ENCODE measurements at regions of chr4 and their contacts with region 1.

Region 1: DNA sequence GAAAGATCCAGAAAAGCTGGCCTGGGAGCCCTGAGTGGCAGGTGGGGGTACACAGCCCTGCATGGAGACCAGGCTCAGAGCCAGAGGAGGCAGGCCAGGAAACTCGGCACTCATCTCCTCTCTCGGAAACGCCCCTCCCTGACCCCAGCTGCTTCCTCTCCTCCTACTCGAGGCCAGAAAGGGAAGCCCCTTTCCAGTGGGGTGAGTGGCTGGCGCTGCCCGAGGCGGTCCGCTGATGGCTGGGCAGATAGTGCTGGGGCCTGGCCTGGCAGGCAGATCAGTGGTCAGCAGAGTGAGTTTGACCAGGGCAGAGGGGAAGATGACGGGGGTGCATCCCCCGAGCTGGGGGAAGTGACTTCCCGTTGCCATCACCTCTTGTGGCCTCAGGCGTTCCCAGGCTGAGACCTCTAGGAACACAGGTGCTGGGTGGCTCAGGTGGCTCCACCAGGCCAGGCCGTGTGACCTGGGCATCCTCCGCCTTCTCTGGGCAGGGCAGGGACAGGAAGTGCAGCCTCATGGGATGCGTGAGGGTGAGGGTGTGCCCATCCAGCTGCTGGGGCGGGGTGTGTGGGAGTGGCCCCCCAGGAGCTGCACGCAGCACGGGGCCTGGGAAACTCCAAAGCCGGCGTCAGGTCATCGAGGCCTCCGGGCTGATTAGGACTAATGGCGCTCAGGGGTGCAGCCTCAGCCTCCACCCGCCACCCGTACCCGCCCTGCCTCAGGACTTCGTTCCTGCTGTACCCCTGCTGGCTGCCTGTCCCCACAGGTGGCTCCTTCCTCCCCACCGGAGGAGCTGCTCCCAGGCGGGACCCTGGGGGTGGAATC is 5.7 kb downstream of the SH3BP2 start:
- DNase-seq: peak; percentile 78
- H3K4me3 Mint-ChIP-seq: peak overlapping the region; percentile 73
- H3K27ac Mint-ChIP-seq: peak overlapping the region; percentile 83
- H3K4me1 Mint-ChIP-seq: peaks cover 61% of the 10 kb centered on the region
- H3K27me3 Mint-ChIP-seq: no peaks in the 10 kb centered on the region

Region 2: DNA sequence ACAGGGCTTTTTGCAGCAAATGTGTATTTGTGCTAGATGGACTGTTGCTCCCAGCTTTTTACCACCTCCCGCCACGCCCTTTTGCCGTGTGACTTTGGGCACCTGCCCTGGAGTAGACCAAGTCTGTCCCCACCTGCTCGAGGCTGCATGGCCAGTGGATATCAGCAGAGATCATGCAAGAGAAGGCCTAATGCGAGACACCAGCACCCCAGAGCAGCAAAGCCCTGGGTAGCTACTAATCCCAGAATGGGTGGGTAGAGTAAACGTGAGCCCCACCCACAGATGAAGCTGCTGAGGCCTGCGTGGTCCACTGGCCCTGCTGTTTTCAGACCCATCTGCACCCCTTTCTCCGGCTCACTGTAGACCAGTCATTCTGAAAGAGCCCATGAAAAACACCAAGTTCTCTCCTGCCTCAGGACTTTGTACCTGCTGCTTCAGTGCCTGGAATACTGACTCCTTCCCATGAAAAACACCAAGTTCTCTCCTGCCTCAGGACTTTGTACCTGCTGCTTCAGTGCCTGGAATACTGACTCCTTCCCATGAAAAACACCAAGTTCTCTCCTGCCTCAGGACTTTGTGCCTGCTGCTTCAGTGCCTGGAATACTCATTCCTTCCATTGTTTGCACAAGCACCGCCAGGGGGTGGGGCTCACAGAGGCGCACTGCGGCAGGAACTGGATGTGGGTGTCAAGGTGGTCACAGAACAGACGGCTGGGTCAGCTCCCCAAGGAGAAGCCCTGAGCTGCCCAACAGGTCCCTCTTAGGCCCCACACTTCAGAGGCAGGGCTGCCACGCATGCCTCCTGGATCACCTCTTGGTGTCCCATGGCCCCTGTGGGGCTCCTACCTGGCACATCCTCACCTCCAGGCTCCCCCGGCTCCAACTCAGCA is 37.3 kb before region 1 on chr4:
- CTCF ChIA-PET with region 1: interaction called, 20 read pairs
- POLR2A ChIA-PET with region 1: no interaction called
- intact Hi-C with region 1: loop called (anchors 5 kb)
- DNase-seq: peak; percentile 51
- H3K4me3 Mint-ChIP-seq: no peak overlapping the region
- H3K27ac Mint-ChIP-seq: no peak overlapping the region
- H3K4me1 Mint-ChIP-seq: peaks cover 9% of the 10 kb centered on the region
- H3K27me3 Mint-ChIP-seq: no peaks in the 10 kb centered on the region

Region 3: DNA sequence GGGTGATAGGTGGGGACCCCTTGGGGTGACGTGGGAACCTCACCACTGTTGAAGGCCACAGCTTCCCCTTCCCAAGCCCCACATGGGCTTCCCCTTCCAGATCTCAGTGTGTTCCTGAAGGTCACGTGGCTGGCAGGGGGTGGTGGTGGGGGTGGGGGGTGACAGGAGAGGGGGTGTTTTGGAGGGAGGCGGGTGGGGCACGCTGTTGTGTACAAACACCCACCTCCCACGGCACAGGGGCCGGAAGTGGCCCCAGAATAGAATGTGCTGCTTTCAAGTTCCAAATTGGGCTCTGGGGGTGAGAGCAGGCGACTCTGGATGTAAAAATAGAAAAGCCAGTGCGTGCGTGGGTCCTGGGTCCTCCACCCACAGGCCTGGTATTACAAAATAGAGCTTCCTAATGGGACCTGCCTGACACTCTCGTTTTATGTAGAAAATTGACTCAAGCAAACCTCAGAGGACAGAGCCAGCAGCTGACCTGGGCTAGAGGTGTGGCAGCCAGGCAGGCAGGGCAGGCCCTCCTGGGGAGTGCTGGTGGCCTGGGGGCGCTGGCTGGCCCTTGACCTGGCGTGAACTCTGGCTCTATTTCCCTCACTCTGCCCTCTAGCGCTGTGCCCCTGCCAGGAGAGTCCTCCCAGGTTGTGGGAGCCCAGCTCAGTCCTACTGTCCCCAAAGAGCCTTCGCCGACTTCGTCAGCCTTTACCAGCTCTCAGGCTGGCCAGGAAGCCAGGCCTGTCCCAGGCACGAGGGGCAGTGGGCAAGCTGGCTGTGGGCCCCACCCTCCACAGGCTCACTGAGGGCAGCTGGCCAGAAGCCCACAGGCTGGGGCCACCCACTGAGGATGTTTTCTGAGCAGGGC is 11.2 kb before region 1 on chr4:
- CTCF ChIA-PET with region 1: interaction called, 4 read pairs
- POLR2A ChIA-PET with region 1: interaction called, 17 read pairs
- intact Hi-C with region 1: no loop called
- DNase-seq: peak; percentile 72
- H3K4me3 Mint-ChIP-seq: peak overlapping the region; percentile 12
- H3K27ac Mint-ChIP-seq: peak overlapping the region; percentile 92
- H3K4me1 Mint-ChIP-seq: peaks cover 60% of the 10 kb centered on the region
- H3K27me3 Mint-ChIP-seq: no peaks in the 10 kb centered on the region

Region 4: GRCh38 chr4:2811830-2812611 is 13.4 kb after region 1 on chr4:
- CTCF ChIA-PET with region 1: interaction called, 4 read pairs
- POLR2A ChIA-PET with region 1: interaction called, 21 read pairs
- intact Hi-C with region 1: no loop called
- DNase-seq: peak; percentile 81
- H3K4me3 Mint-ChIP-seq: peak overlapping the region; percentile 79
- H3K27ac Mint-ChIP-seq: peak overlapping the region; percentile 95
- H3K4me1 Mint-ChIP-seq: peaks cover 48% of the 10 kb centered on the region
- H3K27me3 Mint-ChIP-seq: no peaks in the 10 kb centered on the region

Region 5: DNA sequence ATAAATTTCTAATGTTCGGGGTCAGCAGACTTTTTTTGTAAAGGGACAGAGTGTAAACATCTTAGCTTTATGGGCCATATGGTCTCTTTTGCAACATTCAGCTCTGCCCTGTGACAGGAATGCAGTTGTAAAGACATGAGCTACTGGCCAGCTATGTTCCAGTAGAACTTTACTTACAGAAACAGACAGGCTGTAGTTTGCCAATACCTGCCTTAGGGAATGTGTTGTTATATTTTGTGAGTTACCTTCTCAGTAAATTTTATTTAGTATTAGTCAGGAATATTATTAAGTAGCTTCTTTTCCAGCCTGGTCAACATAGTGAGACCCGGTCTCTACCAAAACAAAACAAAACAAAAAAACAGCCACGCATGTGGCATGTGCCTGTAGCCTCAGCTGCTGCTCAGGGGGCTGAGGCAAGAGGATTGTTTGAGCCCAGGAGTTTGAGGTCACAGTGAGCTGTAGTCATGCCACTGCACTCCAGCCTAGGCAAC is 324.6 kb after region 1 on chr4:
- CTCF ChIA-PET with region 1: no interaction called
- POLR2A ChIA-PET with region 1: no interaction called
- intact Hi-C with region 1: no loop called
- DNase-seq: no peak
- H3K4me3 Mint-ChIP-seq: no peak overlapping the region
- H3K27ac Mint-ChIP-seq: no peak overlapping the region
- H3K4me1 Mint-ChIP-seq: peaks cover 16% of the 10 kb centered on the region
- H3K27me3 Mint-ChIP-seq: no peaks in the 10 kb centered on the region

Measured in activated CD4-positive, alpha-beta memory T cell treated with anti-CD3 and anti-CD28 coated beads for 36 hours (primary cell).